ENCODE measurements at regions of chr10 and their contacts with region 1.

Region 1: GRCh38 chr10:14195433-14195832 is 135.3 kb downstream of the FRMD4A start:
- DNase-seq: no peak
- H3K4me3 Mint-ChIP-seq: no peak overlapping the region
- H3K27ac Mint-ChIP-seq: no peak overlapping the region
- H3K4me1 Mint-ChIP-seq: peaks cover 2% of the 10 kb centered on the region
- H3K27me3 Mint-ChIP-seq: peaks cover 10% of the 10 kb centered on the region

Region 2: DNA sequence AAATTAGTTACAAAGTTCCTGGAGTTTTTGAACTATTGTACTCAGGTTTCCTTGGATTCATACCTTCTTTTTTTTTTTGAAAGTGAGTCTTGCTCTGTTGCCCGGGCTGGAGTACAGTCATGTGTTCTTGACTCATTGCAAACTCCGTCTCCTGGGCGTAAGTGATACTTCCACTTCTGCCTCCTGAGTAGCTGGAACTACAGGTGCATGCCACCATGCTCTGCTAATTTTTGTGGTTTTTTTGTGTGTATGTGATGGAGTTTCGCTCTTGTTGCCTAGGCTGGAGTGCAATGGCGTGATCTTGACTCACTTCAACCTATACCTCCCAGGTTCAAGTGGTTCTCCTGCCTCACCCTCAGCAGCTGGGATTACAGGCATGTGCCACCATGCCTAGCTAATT is 1011.8 kb before region 1 on chr10:
- CTCF ChIA-PET with region 1: no interaction called
- intact Hi-C with region 1: no loop called
- DNase-seq: no peak
- H3K4me3 Mint-ChIP-seq: no peak overlapping the region
- H3K27ac Mint-ChIP-seq: no peak overlapping the region
- H3K4me1 Mint-ChIP-seq: no peaks in the 10 kb centered on the region
- H3K27me3 Mint-ChIP-seq: no peaks in the 10 kb centered on the region

Region 3: GRCh38 chr10:14271621-14272020 is 76.2 kb after region 1 on chr10:
- CTCF ChIA-PET with region 1: no interaction called
- intact Hi-C with region 1: no loop called
- DNase-seq: no peak
- H3K4me3 Mint-ChIP-seq: no peak overlapping the region
- H3K27ac Mint-ChIP-seq: no peak overlapping the region
- H3K4me1 Mint-ChIP-seq: no peaks in the 10 kb centered on the region
- H3K27me3 Mint-ChIP-seq: no peaks in the 10 kb centered on the region

Region 4: GRCh38 chr10:14478604-14479003 is 283.2 kb after region 1 on chr10:
- CTCF ChIA-PET with region 1: interaction called, 17 read pairs
- intact Hi-C with region 1: loop called (anchors 1 kb)
- DNase-seq: peak; percentile 57
- H3K4me3 Mint-ChIP-seq: no peak overlapping the region
- H3K27ac Mint-ChIP-seq: no peak overlapping the region
- H3K4me1 Mint-ChIP-seq: peaks cover 2% of the 10 kb centered on the region
- H3K27me3 Mint-ChIP-seq: peaks cover 5% of the 10 kb centered on the region

Region 5: GRCh38 chr10:14543046-14543903 is 347.8 kb after region 1 on chr10:
- CTCF ChIA-PET with region 1: interaction called, 3 read pairs
- intact Hi-C with region 1: loop called (anchors 5 kb)
- DNase-seq: peak; percentile 73
- H3K4me3 Mint-ChIP-seq: peak overlapping the region; percentile 30
- H3K27ac Mint-ChIP-seq: peak overlapping the region; percentile 83
- H3K4me1 Mint-ChIP-seq: peaks cover 79% of the 10 kb centered on the region
- H3K27me3 Mint-ChIP-seq: no peaks in the 10 kb centered on the region

Region 6: GRCh38 chr10:14971867-14972448 is 776.5 kb after region 1 on chr10:
- CTCF ChIA-PET with region 1: no interaction called
- intact Hi-C with region 1: loop called (anchors 2 kb)
- DNase-seq: peak; percentile 70
- H3K4me3 Mint-ChIP-seq: no peak overlapping the region
- H3K27ac Mint-ChIP-seq: no peak overlapping the region
- H3K4me1 Mint-ChIP-seq: no peaks in the 10 kb centered on the region
- H3K27me3 Mint-ChIP-seq: peaks cover 11% of the 10 kb centered on the region

Measured in activated naive CD4-positive, alpha-beta T cell treated with anti-CD3 and anti-CD28 coated beads for 36 hours (primary cell).